A673 (cell line): ENCODE measurements at regions of chr9 and their contacts with region 1.

Region 1: GRCh38 chr9:113255438-113255837 is 19.9 kb downstream of the CDC26 start:
- DNase-seq: no peak
- H3K4me3 ChIP-seq: no peak overlapping the region
- H3K27ac ChIP-seq: no peak overlapping the region
- H3K4me1 ChIP-seq: no peaks in the 10 kb centered on the region
- H3K27me3 ChIP-seq: no peaks in the 10 kb centered on the region
- CTCF ChIP-seq: no peak

Region 2: GRCh38 chr9:113343732-113344231 is 88.3 kb after region 1 on chr9:
- CTCF ChIA-PET with region 1: no interaction called
- POLR2A ChIA-PET with region 1: no interaction called
- intact Hi-C with region 1: no loop called
- DNase-seq: peak; percentile 74
- H3K4me3 ChIP-seq: no peak overlapping the region
- H3K27ac ChIP-seq: peak overlapping the region; percentile 61
- H3K4me1 ChIP-seq: peaks cover 13% of the 10 kb centered on the region
- H3K27me3 ChIP-seq: peaks cover 7% of the 10 kb centered on the region
- CTCF ChIP-seq: no peak

Region 3: DNA sequence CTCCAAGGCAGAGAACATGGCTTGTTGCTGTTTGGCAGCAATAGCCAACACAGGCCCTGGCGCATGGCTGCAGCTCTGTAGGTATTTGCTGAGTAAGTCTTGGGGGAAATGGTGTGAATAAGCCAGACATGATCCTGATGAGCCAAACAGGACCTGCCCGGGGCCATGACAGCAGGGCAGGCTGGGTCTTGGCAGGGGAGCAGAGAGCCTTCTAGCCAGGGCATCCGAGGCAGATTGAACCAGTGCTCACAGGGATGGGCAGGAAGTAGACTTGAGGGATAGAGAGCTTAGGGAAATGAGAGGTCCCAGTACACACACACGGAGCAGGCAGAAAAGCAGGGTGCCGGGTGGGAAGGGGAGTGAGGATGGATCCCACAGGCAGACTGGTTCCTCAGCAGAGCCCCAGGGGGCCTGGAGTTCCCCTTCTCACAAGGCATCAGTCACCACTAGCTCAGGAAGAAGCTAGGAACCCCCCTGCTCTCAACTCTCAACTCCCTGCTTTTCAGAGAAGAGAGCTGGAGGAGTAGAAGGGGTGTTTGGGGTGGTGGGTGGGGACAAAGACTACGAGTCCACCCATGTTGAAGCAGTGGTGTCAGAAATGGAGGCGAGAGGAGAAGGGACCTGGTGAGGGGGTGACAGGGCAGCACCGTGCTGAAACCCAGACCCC is 319.1 kb after region 1 on chr9:
- CTCF ChIA-PET with region 1: no interaction called
- POLR2A ChIA-PET with region 1: interaction called, 10 read pairs
- intact Hi-C with region 1: no loop called
- DNase-seq: no peak
- H3K4me3 ChIP-seq: no peak overlapping the region
- H3K27ac ChIP-seq: no peak overlapping the region
- H3K4me1 ChIP-seq: no peaks in the 10 kb centered on the region
- H3K27me3 ChIP-seq: no peaks in the 10 kb centered on the region
- CTCF ChIP-seq: no peak